ENCODE measurements at regions of chr2 and their contacts with region 1.

Region 1: GRCh38 chr2:70789304-70790135 is 923 bp downstream of the FIGLA start:
- DNase-seq: peak; percentile 81
- CTCF ChIP-seq: peak; percentile 56

Region 2: GRCh38 chr2:70656421-70657010 is 133.0 kb before region 1 on chr2:
- in situ Hi-C with region 1: loop called (anchors 10 kb)
- DNase-seq: no peak
- CTCF ChIP-seq: no peak